Sciatic nerve (tissue), 2 donors: ENCODE measurements at regions of chr18 and their contacts with region 1.

Region 1: GRCh38 chr18:67742954-67743353 is 226.4 kb upstream of the DSEL start:
- DNase-seq: no peak
- ATAC-seq: no peak

Region 2: GRCh38 chr18:67682516-67682915 is 60.4 kb before region 1 on chr18:
- intact Hi-C with region 1: no loop called
- DNase-seq: no peak
- ATAC-seq: no peak

Region 3: GRCh38 chr18:68427951-68428401 is 685.0 kb after region 1 on chr18:
- intact Hi-C with region 1: loop called (anchors 10 kb)
- DNase-seq: no peak
- ATAC-seq: no peak